ENCODE measurements at regions of chr5 and their contacts with region 1.

Region 1: DNA sequence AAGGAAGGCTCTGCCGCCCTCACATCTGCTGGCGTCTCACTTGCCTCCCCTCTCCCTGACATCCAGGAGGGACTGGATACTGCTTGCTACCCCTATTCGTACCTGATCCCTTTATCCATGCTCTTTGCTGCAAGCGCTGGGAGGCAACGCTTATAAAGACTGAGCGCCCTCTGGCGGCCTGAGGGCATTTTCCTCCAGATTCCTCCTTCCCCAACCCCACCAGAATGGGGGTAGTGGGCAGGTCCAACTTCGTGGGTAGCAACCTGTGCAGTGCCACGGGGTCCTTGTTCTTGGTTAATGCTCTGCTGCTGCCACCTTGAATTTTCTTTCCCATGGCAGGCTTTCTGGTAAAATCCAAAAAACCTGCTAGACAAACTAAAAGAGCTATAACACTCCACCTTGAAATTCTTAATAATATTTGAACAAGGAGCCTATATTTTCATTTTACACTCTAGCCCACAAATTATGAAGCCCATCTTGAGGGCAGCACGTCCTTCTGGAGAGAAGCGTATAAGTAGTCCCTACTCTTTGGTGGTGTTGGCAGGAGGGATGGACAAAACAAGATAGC is 52.4 kb downstream of the JADE2 start:
- DNase-seq: peak; percentile 56 to 83 (median 65)
- H3K4me3 ChIP-seq: no peak overlapping the region
- H3K4me3 Mint-ChIP-seq: peak overlapping the region in 1 of 7 donors; percentile 32
- H3K27ac ChIP-seq: no peak overlapping the region
- H3K27ac Mint-ChIP-seq: peak overlapping the region in 7 of 8 donors; percentile 30 to 95 (median 48)
- H3K4me1 ChIP-seq: peaks cover 6% of the 10 kb centered on the region
- H3K4me1 Mint-ChIP-seq: peaks cover 7 to 23% (median 8%) of the 10 kb centered on the region in 3 donors
- H3K27me3 ChIP-seq: no peaks in the 10 kb centered on the region
- H3K27me3 Mint-ChIP-seq: no peaks in the 10 kb centered on the region

Region 2: DNA sequence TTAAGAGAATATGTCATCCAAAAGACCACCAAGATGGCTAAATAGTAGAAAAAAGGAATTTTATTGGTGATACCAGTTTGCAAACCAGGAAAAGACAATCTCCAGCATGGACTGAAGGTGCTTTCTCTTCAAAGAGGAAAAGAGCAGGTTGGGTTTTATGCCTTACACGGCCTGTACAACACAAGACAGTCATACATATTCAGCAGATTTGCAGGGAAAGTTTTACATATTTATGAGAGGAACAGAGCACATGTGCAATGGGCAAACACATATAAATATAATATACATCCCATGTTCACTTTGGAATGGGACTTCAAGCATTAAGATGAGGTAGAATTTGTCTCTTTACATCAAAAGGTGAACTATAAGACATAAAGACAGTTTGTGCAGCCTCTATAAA is 281.7 kb before region 1 on chr5:
- CTCF ChIA-PET with region 1: interaction called, 11 read pairs
- POLR2A ChIA-PET with region 1: no interaction called
- DNase-seq: no peak
- H3K4me3 ChIP-seq: no peak overlapping the region
- H3K4me3 Mint-ChIP-seq: no peak overlapping the region
- H3K27ac ChIP-seq: no peak overlapping the region
- H3K27ac Mint-ChIP-seq: no peak overlapping the region
- H3K4me1 ChIP-seq: no peaks in the 10 kb centered on the region
- H3K4me1 Mint-ChIP-seq: no peaks in the 10 kb centered on the region
- H3K27me3 ChIP-seq: no peaks in the 10 kb centered on the region
- H3K27me3 Mint-ChIP-seq: peaks cover 4% of the 10 kb centered on the region in 2 donors

Measured in CD8-positive, alpha-beta memory T cell (primary cell).